ENCODE measurements at regions of chr13 and their contacts with region 1.

Region 1: GRCh38 chr13:42271337-42272114 is 426 bp upstream of the AKAP11 start:
- DNase-seq: peak; percentile 92
- H3K4me3 Mint-ChIP-seq: peak overlapping the region; percentile 92
- H3K27ac Mint-ChIP-seq: peak overlapping the region; percentile 97
- H3K4me1 Mint-ChIP-seq: peaks cover 56% of the 10 kb centered on the region
- H3K27me3 Mint-ChIP-seq: peaks cover 7% of the 10 kb centered on the region

Region 2: GRCh38 chr13:41061075-41061913 is 1210.2 kb before region 1 on chr13 and contains the start of gene WBP4:
- intact Hi-C with region 1: loop called (anchors 2 kb)
- DNase-seq: peak; percentile 85
- H3K4me3 Mint-ChIP-seq: peak within 1 kb of the TSS; percentile 98
- H3K27ac Mint-ChIP-seq: peak within 1 kb of the TSS; percentile 99
- H3K4me1 Mint-ChIP-seq: peaks cover 72% of the 10 kb centered on the region
- H3K27me3 Mint-ChIP-seq: peaks cover 6% of the 10 kb centered on the region
- total RNA-seq, gene WBP4: 13.4 and 14.0 TPM in 2 replicates

Region 3: DNA sequence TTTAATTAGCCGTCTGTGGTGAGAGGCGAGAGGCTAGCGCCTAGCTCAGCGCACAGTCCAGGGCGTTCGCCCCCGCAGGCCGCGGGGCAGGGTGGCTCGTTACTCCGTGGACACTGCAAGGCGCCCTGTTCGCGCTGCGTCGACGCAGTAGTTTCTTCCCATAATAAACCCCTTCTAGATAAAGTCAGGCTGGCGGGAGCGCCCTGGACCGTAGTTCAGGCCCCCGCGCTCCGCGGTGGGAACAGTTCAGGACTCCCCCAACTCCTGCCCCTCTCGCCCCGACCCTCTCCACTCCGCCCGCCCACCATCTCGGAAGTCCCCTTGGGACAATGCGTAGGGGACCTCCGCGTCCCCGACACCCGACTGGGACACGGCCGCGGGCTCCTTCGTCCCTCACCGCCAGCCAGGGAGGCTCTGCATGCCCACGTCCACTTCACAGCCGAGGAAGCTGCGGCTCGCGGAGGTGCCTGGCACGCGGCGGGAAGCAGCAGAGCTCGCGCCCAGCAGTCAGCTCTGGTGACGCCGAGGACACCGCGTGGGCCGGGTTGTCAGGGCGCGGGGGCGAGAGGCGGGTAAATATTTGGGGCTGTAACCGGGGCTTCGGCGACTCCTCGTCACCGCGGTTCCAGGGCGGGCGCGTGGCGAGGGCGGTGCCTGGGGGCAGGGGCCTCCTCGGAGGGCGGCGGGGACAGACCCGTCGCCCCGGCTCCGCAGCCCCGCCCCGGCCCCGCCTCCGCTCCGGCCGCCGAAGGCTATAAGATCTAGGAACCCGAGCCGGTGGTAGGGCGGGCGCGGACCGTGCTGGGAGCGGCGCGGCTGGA is 814.5 kb before region 1 on chr13 and contains the start of gene RGCC:
- intact Hi-C with region 1: loop called (anchors 10 kb)
- DNase-seq: peak; percentile 87
- H3K4me3 Mint-ChIP-seq: peak within 1 kb of the TSS; percentile 95
- H3K27ac Mint-ChIP-seq: peak within 1 kb of the TSS; percentile 96
- H3K4me1 Mint-ChIP-seq: peaks cover 44% of the 10 kb centered on the region
- H3K27me3 Mint-ChIP-seq: peaks cover 22% of the 10 kb centered on the region
- total RNA-seq, gene RGCC: 135 and 139 TPM in 2 replicates

Region 4: DNA sequence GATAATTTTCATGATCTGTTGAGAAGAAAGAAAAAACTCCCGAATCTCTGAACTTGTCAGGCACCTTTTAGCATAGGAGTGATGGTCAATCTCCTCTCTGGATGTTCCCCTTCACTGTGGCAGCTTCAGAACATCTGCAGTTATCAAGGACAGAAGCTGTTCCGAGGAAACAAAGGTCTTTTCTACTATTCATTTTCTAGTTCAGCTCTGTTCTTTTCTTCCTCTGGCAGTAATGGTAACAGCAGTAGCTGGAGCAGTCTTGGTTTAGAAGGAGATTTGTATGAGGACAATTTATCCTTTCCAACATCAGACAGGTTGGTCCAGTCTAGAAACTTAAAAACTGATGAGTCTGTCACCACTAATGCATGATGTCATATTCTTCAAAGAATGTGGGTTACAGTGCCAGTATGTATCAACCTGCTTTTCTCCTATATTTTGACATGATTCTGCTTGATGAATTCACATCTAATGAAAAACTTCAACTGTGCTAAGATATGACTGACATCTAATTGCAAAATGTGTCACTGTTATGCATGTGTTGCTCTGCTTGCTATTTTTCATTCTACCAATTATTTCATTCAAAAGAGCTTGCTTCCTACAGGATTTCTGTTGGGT is 41.4 kb after region 1 on chr13:
- intact Hi-C with region 1: loop called (anchors 5 kb)
- DNase-seq: no peak
- H3K4me3 Mint-ChIP-seq: no peak overlapping the region
- H3K27ac Mint-ChIP-seq: no peak overlapping the region
- H3K4me1 Mint-ChIP-seq: peaks cover 28% of the 10 kb centered on the region
- H3K27me3 Mint-ChIP-seq: no peaks in the 10 kb centered on the region

Region 5: GRCh38 chr13:42392716-42393572 is 121.4 kb after region 1 on chr13:
- intact Hi-C with region 1: loop called (anchors 1 kb)
- DNase-seq: peak; percentile 45
- H3K4me3 Mint-ChIP-seq: peak overlapping the region; percentile 89
- H3K27ac Mint-ChIP-seq: peak overlapping the region; percentile 100
- H3K4me1 Mint-ChIP-seq: peaks cover 79% of the 10 kb centered on the region
- H3K27me3 Mint-ChIP-seq: no peaks in the 10 kb centered on the region

Region 6: DNA sequence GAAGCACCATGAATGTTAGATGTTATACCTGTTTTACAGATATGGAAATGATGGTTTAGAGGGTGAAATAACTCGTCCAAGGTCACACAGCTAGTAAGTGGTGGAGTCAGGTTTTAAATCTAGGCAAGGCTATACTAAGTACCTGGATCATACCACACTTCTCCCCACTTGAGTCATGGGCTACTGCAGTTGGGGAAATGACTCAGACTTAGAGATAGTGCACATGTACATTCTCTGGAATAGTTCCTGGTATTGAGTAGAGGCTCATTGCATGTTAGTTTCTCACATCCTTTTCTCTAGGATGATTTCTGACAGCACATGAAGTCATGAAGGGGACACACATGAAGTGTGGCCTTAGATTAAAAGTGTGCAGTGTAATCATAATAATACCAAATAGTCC is 226.3 kb after region 1 on chr13:
- intact Hi-C with region 1: loop called (anchors 2 kb)
- DNase-seq: peak; percentile 12
- H3K4me3 Mint-ChIP-seq: no peak overlapping the region
- H3K27ac Mint-ChIP-seq: peak overlapping the region; percentile 86
- H3K4me1 Mint-ChIP-seq: peaks cover 54% of the 10 kb centered on the region
- H3K27me3 Mint-ChIP-seq: no peaks in the 10 kb centered on the region

Region 7: GRCh38 chr13:43041369-43041921 is 769.9 kb after region 1 on chr13:
- intact Hi-C with region 1: loop called (anchors 10 kb)
- DNase-seq: no peak
- H3K4me3 Mint-ChIP-seq: no peak overlapping the region
- H3K27ac Mint-ChIP-seq: no peak overlapping the region
- H3K4me1 Mint-ChIP-seq: peaks cover 51% of the 10 kb centered on the region
- H3K27me3 Mint-ChIP-seq: no peaks in the 10 kb centered on the region